Breast epithelium (tissue), 4 donors: ENCODE measurements at regions of chr5 and their contacts with region 1.

Region 1: DNA sequence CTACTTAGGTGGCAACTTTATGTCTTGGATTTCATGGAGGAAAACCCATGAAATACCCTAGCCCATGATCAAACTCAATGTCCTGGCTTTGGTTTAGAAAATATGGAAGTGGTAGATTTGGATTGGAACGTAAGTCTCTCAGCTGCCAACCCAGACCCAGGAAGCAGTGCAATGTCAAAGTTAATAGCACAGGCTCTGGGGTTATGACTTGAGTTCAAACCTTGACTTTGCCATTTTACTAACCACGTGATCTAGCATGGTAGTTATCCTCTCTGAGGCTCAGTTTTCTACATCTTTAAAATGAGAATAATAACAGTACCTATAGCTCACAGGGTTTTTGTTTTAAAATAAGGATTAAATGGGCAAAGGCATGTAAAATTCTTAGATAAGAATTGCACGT is 13.8 kb downstream of the FYB1 start:
- DNase-seq: no peak
- H3K4me3 ChIP-seq: no peak overlapping the region
- H3K27ac ChIP-seq: no peak overlapping the region
- H3K4me1 ChIP-seq: no peaks in the 10 kb centered on the region
- H3K27me3 ChIP-seq: no peaks in the 10 kb centered on the region
- CTCF ChIP-seq: no peak
- POLR2A ChIP-seq: no peak

Region 2: DNA sequence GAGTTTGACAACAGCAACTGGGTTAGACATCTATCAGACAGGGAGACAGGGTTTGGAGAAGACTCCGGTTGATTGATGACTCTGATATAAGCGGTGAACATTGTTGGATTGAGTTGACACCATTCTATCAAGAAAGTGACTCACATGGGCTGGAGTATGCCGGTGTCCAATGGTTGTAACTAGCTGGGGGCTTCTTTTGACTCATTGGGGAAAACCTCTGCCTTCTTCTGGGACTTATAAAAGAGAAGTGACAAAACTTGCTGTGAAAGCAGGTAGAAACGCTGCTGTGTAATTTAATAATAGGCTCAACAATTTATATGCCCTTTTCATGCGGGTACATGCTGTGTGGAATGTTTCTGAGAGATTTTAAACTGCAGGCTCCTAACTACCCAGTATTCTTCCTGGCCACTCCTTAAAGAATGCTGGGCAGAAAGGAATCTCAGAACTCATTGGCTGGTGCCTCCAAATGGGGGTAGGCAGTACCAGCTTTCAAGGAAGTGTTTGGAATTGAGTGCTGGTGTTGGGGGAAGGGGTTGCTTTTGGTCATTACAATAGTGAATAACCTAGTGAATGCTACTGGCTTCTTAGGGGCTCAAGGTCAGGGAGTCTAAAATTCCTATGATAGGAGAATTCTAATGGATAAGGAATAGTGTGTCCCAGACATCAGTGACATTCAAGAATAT is 30.1 kb before region 1 on chr5:
- intact Hi-C with region 1: loop called (anchors 1 kb)
- DNase-seq: no peak
- H3K4me3 ChIP-seq: no peak overlapping the region
- H3K27ac ChIP-seq: no peak overlapping the region
- H3K4me1 ChIP-seq: no peaks in the 10 kb centered on the region
- H3K27me3 ChIP-seq: no peaks in the 10 kb centered on the region
- CTCF ChIP-seq: no peak
- POLR2A ChIP-seq: no peak